Heart right ventricle (tissue), 16 donors: ENCODE measurements at regions of chr13 and their contacts with region 1.

Region 1: DNA sequence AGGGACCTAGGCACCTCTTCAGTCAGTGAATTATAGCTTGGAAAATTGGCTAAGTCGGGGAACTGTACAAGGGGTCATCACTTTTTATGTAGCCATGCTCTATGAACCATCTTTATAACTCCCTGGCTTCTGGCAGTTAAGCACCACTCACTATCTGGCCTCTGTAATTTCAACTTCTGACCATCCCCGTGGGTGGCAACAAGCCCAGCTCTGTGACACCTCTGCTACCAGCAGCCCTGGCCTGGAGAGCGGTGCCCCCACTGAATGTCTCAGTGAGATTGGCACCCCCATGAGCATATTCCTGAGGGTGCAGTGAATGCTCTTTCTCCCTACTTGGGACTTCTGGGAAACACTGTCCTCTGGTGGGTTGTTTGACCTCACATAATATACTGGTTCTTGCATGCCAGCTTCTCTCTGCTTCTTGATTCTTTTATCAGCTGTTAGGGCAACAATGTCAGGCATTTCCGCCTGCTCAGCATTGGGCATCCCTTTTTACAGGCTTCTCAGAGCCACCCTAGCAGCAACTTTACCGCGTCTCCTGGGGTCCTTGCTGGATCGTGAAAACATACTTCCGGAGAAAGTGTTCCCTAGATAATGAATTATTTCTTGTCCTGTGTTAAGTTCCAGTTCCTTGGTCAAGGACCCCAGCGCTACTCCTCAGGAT is 10.4 kb downstream of the KL start:
- DNase-seq: peak; percentile 39 to 40
- ATAC-seq: peak; percentile 38 to 96 (median 78)
- H3K4me3 ChIP-seq: no peak overlapping the region
- H3K27ac ChIP-seq: peak overlapping the region in 2 of 10 donors; percentile 23 to 40
- H3K4me1 ChIP-seq: peaks cover 0 to 16% (median 4%) of the 10 kb centered on the region in 9 donors
- H3K27me3 ChIP-seq: no peaks in the 10 kb centered on the region
- CTCF ChIP-seq: peak in 1 of 9 donors; percentile 12

Region 2: DNA sequence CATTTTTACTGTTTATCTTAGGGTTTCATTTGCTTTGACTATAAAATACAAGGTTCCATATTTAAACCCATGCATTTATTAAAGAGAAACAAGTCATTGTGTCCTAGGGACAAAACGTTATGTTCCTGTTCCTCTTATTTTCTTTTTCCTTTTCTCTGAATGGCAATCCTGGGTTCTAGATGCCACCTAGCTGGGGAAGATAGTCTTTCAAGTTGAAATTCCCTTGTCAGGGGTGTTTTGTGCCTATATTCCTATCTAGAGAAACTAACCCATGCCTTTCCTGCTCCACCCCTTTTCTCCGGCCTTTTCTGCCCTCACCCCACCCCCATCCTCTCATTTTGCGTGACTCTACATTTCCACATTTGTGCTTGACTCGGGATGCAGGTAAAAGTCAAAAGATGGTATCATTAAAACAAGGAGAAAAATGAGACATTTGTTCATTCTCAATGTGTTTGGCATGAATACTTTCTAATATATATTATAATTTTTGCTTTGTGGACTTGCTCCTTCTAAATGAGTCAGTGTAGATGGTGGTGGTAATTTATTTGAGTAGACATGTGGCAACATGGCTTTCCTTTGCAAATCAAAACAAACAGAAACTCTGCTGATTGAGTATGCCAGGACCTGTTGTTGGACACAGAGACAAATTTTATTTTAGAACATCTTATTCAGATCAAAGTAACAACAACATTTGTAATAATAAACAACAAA is 285.7 kb after region 1 on chr13:
- intact Hi-C with region 1: loop called in 1 of 10 experiments (anchors 10 kb)
- DNase-seq: no peak
- ATAC-seq: peak in 5 of 8 donors; percentile 46 to 75 (median 58)
- H3K4me3 ChIP-seq: no peak overlapping the region
- H3K27ac ChIP-seq: no peak overlapping the region
- H3K4me1 ChIP-seq: peaks cover 0 to 29% (median 9%) of the 10 kb centered on the region in 9 donors
- H3K27me3 ChIP-seq: no peaks in the 10 kb centered on the region
- CTCF ChIP-seq: peak in 8 of 9 donors; percentile 25 to 62 (median 46)